GM12878 (cell line): ENCODE measurements at regions of chr1 and their contacts with region 1.

Region 1: GRCh38 chr1:100351095-100351891 is 1.0 kb upstream of the CDC14A start:
- DNase-seq: peak; percentile 82
- ATAC-seq: peak; percentile 70
- H3K4me3 ChIP-seq: peak overlapping the region; percentile 91
- H3K27ac ChIP-seq: peak overlapping the region; percentile 59
- H3K4me1 ChIP-seq: no peaks in the 10 kb centered on the region
- H3K27me3 ChIP-seq: no peaks in the 10 kb centered on the region
- CTCF ChIP-seq: peak; percentile 44 to 55 (median 53); a peak in 5 of 6 replicates
- EP300 ChIP-seq: no peak
- POLR2A ChIP-seq: peak; percentile 44
- RAD21 ChIP-seq: peak; percentile 53

Region 2: GRCh38 chr1:99808391-99809115 is 542.7 kb before region 1 on chr1:
- CTCF ChIA-PET with region 1: interaction called, 7 read pairs
- POLR2A ChIA-PET with region 1: no interaction called
- RAD21 ChIA-PET with region 1: no interaction called
- SMC1A ChIA-PET with region 1: no interaction called
- in situ Hi-C with region 1: no loop called
- intact Hi-C with region 1: loop called (anchors 10 kb)
- DNase-seq: peak; percentile 79
- ATAC-seq: peak; percentile 96
- H3K4me3 ChIP-seq: no peak overlapping the region
- H3K27ac ChIP-seq: peak overlapping the region; percentile 67
- H3K4me1 ChIP-seq: peaks cover 10% of the 10 kb centered on the region
- H3K27me3 ChIP-seq: no peaks in the 10 kb centered on the region
- CTCF ChIP-seq: peak; percentile 24 to 72 (median 55); a peak in 5 of 6 replicates
- EP300 ChIP-seq: no peak
- POLR2A ChIP-seq: no peak
- RAD21 ChIP-seq: peak; percentile 85

Region 3: DNA sequence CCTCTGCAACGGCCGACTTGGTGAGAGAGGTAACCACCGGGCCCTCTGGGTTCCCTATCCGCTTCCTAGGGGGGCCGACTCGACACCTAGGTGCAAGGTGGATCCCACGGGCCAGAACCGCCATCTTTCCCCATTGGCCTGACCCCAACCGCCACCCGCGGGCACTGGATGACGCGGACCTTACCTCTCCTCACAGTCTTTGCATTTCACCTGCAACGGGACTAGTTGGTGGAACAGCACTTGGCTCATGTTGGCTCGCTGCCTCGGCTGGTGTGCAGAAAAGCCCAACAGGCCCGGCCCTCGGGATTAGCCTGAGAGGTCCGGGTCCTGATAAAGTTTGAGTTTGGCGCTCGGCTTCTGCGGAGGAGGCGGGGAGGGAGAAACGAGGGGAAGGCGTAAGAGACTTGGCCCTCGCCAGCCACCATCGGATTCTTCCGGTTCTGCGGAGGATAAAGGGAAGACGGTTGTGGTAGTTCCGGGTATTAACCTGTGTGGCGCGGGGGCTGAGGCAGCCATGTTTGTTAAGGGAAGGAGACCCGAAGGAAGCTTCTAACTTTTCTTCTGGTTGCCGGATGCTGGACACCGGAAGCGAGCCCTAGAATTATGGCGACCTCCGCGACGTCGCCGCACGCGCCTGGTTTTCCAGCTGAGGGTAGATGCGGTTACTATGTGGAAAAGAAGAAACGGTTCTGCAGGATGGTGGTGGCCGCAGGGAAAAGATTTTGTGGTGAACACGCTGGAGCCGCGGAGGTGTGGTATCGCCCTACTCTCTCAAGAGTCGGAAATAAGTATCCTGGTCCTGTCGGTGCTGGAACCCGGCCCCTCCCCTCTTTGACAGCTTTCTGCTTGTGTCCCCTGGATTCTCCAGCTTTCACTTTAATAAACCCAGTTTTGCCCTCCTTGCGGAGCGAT is 218.5 kb before region 1 on chr1 and contains the starts of genes SASS6 and TRMT13:
- CTCF ChIA-PET with region 1: interaction called, 4 read pairs
- POLR2A ChIA-PET with region 1: interaction called, 3 read pairs
- RAD21 ChIA-PET with region 1: no interaction called
- SMC1A ChIA-PET with region 1: interaction called, 3 read pairs
- in situ Hi-C with region 1: no loop called
- intact Hi-C with region 1: loop called (anchors 2 kb)
- DNase-seq: peak; percentile 90
- ATAC-seq: peak; percentile 91
- H3K4me3 ChIP-seq: peak within 1 kb of the TSS; percentile 99
- H3K27ac ChIP-seq: peak within 1 kb of the TSS; percentile 83
- H3K4me1 ChIP-seq: peaks cover 11% of the 10 kb centered on the region
- H3K27me3 ChIP-seq: no peaks in the 10 kb centered on the region
- CTCF ChIP-seq: no peak
- EP300 ChIP-seq: peak in 1 of 2 experiments; percentile 43; a peak in 1 of 4 replicates
- POLR2A ChIP-seq: peak; percentile 80
- RAD21 ChIP-seq: no peak
- polyA plus RNA-seq, gene SASS6: 8.2 to 10.7 TPM
- polyA plus RNA-seq, gene TRMT13: 17.1 to 22.3 TPM

Region 4: DNA sequence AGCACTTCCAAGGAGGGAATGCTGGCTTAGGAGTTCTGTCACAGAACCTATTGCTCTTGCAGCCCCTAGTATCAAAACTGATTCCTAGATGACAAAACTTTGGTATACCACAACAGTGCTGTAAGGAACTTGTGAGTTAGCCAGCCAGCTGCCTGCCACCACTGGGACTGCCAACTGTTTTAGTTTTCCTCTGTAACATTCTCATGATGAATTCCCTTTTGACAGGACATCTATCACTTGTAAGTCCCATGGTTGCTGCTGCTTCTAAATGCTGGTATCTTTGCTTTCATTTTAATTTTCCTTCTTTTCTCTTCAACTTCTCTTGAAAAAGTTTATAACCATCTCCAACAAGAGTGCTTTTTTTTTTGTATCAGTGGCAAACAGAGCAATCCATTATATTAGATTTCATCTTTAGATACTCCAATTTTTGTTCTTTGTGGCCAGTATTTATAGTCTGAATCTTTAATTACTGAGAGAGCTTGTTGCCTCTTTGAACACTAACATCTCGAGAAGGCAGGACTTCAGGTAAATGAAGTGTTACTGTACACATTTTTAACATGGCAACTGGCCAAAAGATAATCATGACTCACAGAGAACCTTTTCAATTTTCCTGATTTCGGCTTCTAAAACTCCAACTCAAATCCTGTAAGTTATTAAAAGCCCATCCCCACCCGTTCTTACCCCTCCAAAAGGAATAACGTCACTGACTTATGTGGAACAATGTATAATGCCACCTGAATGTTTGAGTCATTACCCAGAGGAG is 121.4 kb before region 1 on chr1:
- CTCF ChIA-PET with region 1: no interaction called
- POLR2A ChIA-PET with region 1: no interaction called
- RAD21 ChIA-PET with region 1: no interaction called
- SMC1A ChIA-PET with region 1: no interaction called
- in situ Hi-C with region 1: no loop called
- intact Hi-C with region 1: no loop called
- DNase-seq: no peak
- ATAC-seq: no peak
- H3K4me3 ChIP-seq: no peak overlapping the region
- H3K27ac ChIP-seq: no peak overlapping the region
- H3K4me1 ChIP-seq: no peaks in the 10 kb centered on the region
- H3K27me3 ChIP-seq: no peaks in the 10 kb centered on the region
- CTCF ChIP-seq: no peak
- EP300 ChIP-seq: no peak
- POLR2A ChIP-seq: no peak
- RAD21 ChIP-seq: no peak

Region 5: GRCh38 chr1:100265931-100266740 is 85.2 kb before region 1 on chr1 and contains the start of gene RTCA:
- CTCF ChIA-PET with region 1: interaction called, 13 read pairs
- POLR2A ChIA-PET with region 1: interaction called, 5 read pairs
- RAD21 ChIA-PET with region 1: interaction called, 22 read pairs
- SMC1A ChIA-PET with region 1: interaction called, 19 read pairs
- in situ Hi-C with region 1: no loop called
- intact Hi-C with region 1: loop called (anchors 1 kb)
- DNase-seq: peak; percentile 74
- ATAC-seq: peak; percentile 96
- H3K4me3 ChIP-seq: peak within 1 kb of the TSS; percentile 100
- H3K27ac ChIP-seq: peak within 1 kb of the TSS; percentile 73
- H3K4me1 ChIP-seq: peaks cover 2% of the 10 kb centered on the region; the same call in 1 of the 2 replicates
- H3K27me3 ChIP-seq: no peaks in the 10 kb centered on the region
- CTCF ChIP-seq: no peak
- EP300 ChIP-seq: no peak
- POLR2A ChIP-seq: peak; percentile 83; the same call in 1 of the 2 replicates
- RAD21 ChIP-seq: no peak
- polyA plus RNA-seq, gene RTCA: 10.3 to 23.6 TPM

Region 6: DNA sequence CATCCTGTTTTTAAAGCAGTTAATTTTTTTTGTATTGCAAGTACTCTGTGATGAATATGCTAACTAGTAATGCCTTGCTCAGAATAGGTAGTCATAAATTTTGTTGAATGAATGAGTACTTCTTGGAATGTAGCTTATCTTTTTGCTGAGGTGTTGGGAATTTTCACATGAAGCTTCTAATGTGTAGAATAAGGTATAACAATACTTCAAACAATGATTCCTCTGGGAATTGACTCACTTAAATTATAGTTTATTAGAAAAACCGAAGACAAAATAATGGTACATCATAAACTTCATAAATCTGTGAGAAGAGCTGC is 14.9 kb after region 1 on chr1:
- CTCF ChIA-PET with region 1: interaction called, 8 read pairs
- POLR2A ChIA-PET with region 1: interaction called, 12 read pairs
- RAD21 ChIA-PET with region 1: interaction called, 13 read pairs
- SMC1A ChIA-PET with region 1: interaction called, 10 read pairs
- in situ Hi-C with region 1: no loop called
- intact Hi-C with region 1: no loop called
- DNase-seq: no peak
- ATAC-seq: no peak
- H3K4me3 ChIP-seq: no peak overlapping the region
- H3K27ac ChIP-seq: no peak overlapping the region
- H3K4me1 ChIP-seq: no peaks in the 10 kb centered on the region; the same call in 1 of the 2 replicates
- H3K27me3 ChIP-seq: no peaks in the 10 kb centered on the region
- CTCF ChIP-seq: no peak
- EP300 ChIP-seq: no peak
- POLR2A ChIP-seq: no peak
- RAD21 ChIP-seq: no peak

Region 7: GRCh38 chr1:100387209-100387608 is 35.9 kb after region 1 on chr1:
- CTCF ChIA-PET with region 1: interaction called, 12 read pairs
- POLR2A ChIA-PET with region 1: interaction called, 7 read pairs
- RAD21 ChIA-PET with region 1: interaction called, 5 read pairs
- SMC1A ChIA-PET with region 1: interaction called, 9 read pairs
- in situ Hi-C with region 1: no loop called
- intact Hi-C with region 1: no loop called
- DNase-seq: no peak
- ATAC-seq: peak; percentile 58
- H3K4me3 ChIP-seq: no peak overlapping the region
- H3K27ac ChIP-seq: peak overlapping the region; percentile 46
- H3K4me1 ChIP-seq: peaks cover 23% of the 10 kb centered on the region
- H3K27me3 ChIP-seq: no peaks in the 10 kb centered on the region
- CTCF ChIP-seq: no peak
- EP300 ChIP-seq: no peak
- POLR2A ChIP-seq: no peak
- RAD21 ChIP-seq: no peak

Region 8: DNA sequence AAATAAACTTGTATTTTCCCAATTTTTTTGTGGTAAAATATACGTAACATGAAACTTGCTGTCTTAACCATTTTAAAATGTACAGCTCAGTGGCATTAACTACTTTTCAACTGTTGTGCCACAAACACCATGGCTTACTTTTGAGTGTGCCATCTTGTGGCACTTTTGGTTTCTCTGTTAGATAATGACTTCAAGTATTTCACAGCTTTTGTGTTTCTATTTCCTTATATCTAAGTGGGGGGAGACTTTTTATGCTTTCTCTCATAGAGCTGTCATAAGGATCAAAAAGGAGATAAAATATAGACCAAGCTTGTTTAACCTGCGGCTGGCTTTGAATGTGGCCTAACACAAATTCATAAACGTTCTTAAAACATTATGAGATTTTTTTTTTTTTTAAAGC is 45.4 kb after region 1 on chr1:
- CTCF ChIA-PET with region 1: interaction called, 8 read pairs
- POLR2A ChIA-PET with region 1: interaction called, 5 read pairs
- RAD21 ChIA-PET with region 1: interaction called, 4 read pairs
- SMC1A ChIA-PET with region 1: interaction called, 18 read pairs
- in situ Hi-C with region 1: no loop called
- intact Hi-C with region 1: no loop called
- DNase-seq: no peak
- ATAC-seq: peak; percentile 48
- H3K4me3 ChIP-seq: no peak overlapping the region
- H3K27ac ChIP-seq: no peak overlapping the region
- H3K4me1 ChIP-seq: no peaks in the 10 kb centered on the region
- H3K27me3 ChIP-seq: no peaks in the 10 kb centered on the region
- CTCF ChIP-seq: no peak
- EP300 ChIP-seq: no peak
- POLR2A ChIP-seq: no peak
- RAD21 ChIP-seq: no peak